PC-9 (cell line): ENCODE measurements at regions of chr9 and their contacts with region 1.

Region 1: DNA sequence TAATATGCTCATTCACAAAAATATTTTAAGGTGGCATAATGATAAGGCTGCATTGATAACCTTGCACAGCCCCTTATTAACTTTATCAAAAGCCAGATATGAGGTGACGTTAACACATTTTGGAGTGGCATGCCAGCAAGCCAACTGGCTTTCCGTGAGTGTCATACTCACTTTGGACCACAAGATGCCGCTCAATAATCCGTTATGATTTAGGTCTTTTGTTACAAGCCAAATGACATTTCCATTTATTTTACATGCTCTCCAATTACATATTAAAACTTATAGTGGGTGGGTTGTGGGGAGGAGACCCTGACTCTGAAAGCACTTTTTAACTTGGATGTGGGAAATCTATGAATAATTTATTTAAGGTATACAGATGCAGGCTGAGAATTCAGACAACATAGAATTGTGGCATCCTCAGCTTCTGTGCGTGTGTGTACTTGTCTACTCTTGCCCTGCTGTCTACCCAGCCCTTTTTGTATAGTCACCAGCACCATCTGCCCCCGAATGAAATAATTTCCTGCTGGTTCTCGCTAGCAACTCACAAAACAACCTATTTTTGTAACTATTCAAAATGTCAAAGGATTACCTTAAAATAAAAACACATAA is 305.1 kb downstream of the PSAT1 start:
- DNase-seq: peak in 1 of 2 experiments; percentile 29
- H3K4me3 ChIP-seq: no peak overlapping the region
- H3K27ac ChIP-seq: no peak overlapping the region
- H3K4me1 ChIP-seq: no peaks in the 10 kb centered on the region
- H3K27me3 ChIP-seq: peaks cover 29% of the 10 kb centered on the region
- CTCF ChIP-seq: peak; percentile 78

Region 2: GRCh38 chr9:78668148-78668825 is 66.2 kb after region 1 on chr9:
- CTCF ChIA-PET with region 1: no interaction called
- POLR2A ChIA-PET with region 1: no interaction called
- intact Hi-C with region 1: loop called (anchors 10 kb)
- DNase-seq: peak; percentile 47 to 48
- H3K4me3 ChIP-seq: no peak overlapping the region
- H3K27ac ChIP-seq: no peak overlapping the region
- H3K4me1 ChIP-seq: no peaks in the 10 kb centered on the region; the same call in 1 of the 2 replicates
- H3K27me3 ChIP-seq: no peaks in the 10 kb centered on the region
- CTCF ChIP-seq: no peak

Region 3: GRCh38 chr9:78820855-78821822 is 219.1 kb after region 1 on chr9:
- CTCF ChIA-PET with region 1: no interaction called
- POLR2A ChIA-PET with region 1: no interaction called
- intact Hi-C with region 1: loop called (anchors 5 kb)
- DNase-seq: no peak
- H3K4me3 ChIP-seq: no peak overlapping the region
- H3K27ac ChIP-seq: no peak overlapping the region
- H3K4me1 ChIP-seq: no peaks in the 10 kb centered on the region
- H3K27me3 ChIP-seq: no peaks in the 10 kb centered on the region
- CTCF ChIP-seq: peak; percentile 87

Region 4: GRCh38 chr9:79129865-79130480 is 527.9 kb after region 1 on chr9:
- CTCF ChIA-PET with region 1: no interaction called
- POLR2A ChIA-PET with region 1: no interaction called
- intact Hi-C with region 1: loop called (anchors 5 kb)
- DNase-seq: peak in 1 of 2 experiments; percentile 51
- H3K4me3 ChIP-seq: no peak overlapping the region
- H3K27ac ChIP-seq: no peak overlapping the region
- H3K4me1 ChIP-seq: no peaks in the 10 kb centered on the region
- H3K27me3 ChIP-seq: no peaks in the 10 kb centered on the region; the same call in none of the 2 replicates
- CTCF ChIP-seq: peak; percentile 76